Endothelial cell of umbilical vein (primary cell): ENCODE measurements at regions of chr1 and their contacts with region 1.

Region 1: GRCh38 chr1:222009105-222009730 is 267.3 kb upstream of the DUSP10 start:
- DNase-seq: peak; percentile 12
- H3K4me3 ChIP-seq: no peak overlapping the region
- H3K27ac ChIP-seq: no peak overlapping the region
- H3K4me1 ChIP-seq: no peaks in the 10 kb centered on the region
- H3K27me3 ChIP-seq: no peaks in the 10 kb centered on the region
- CTCF ChIP-seq: peak; percentile 7 to 13
- POLR2A ChIP-seq: no peak

Region 2: DNA sequence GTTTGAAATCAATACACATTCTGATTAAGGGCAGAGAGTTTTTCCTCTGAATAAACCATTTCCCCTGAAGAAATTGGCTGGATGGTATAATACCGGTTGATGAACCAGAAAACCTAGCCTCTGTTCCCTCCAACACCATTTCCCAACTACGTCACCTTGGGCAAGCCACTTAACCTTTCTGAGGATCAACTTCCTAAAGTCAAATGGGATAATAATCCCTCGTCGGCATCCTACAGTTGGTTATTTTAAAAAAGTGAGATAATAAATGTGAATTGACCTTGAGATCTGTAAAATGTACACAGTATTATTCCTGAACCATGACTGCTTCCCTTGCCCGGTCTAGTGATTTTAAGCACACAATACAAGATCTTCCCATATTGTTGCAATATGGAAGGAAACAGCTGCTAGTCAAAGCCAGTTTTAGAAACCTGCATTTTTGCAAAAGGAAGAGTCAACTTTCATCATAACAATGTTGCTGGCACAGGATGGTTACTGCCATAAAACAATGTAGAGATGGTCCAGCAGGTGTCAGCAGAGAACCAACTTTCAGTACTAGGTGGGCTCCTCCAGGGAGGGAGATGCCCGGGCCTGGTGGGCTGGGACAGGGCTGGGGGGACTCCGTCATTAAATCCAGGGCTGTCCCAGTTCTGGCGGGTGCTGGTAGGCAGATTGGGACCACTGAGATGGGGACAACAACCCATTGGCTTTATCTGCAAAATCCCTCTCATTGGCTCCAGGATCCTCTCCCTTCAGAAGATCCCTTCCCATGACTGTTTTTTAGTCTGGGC is 1135.2 kb before region 1 on chr1:
- CTCF ChIA-PET with region 1: no interaction called
- POLR2A ChIA-PET with region 1: no interaction called
- dilution Hi-C with region 1: no loop called
- intact Hi-C with region 1: loop called (anchors 2 kb)
- DNase-seq: peak; percentile 93
- H3K4me3 ChIP-seq: no peak overlapping the region
- H3K27ac ChIP-seq: peak overlapping the region; percentile 0
- H3K4me1 ChIP-seq: peaks cover 37% of the 10 kb centered on the region
- H3K27me3 ChIP-seq: peaks cover 3 to 14% of the 10 kb centered on the region in 2 experiments
- CTCF ChIP-seq: peak; percentile 52 to 69
- POLR2A ChIP-seq: no peak

Region 3: DNA sequence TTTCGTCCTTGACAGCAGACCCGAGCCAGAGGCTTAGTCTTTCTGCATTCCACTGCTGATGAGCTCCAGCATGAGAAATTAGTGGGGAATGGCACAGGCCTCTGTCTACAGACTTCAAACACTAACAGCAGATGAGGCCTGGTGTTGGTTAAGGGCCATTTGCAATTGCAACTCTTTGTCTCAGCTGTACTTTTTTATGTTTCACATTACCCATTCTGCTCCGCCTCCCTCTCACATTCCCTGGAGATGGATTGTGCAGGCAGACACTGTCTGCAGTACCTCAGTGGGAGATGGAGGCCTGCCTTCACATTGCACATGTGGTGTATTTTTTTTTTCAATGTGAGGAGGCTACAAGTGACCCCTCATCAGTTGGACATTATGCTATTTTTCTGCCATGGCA is 637.5 kb before region 1 on chr1:
- CTCF ChIA-PET with region 1: no interaction called
- POLR2A ChIA-PET with region 1: no interaction called
- dilution Hi-C with region 1: no loop called
- intact Hi-C with region 1: loop called (anchors 10 kb)
- DNase-seq: no peak
- H3K4me3 ChIP-seq: no peak overlapping the region
- H3K27ac ChIP-seq: no peak overlapping the region
- H3K4me1 ChIP-seq: no peaks in the 10 kb centered on the region
- H3K27me3 ChIP-seq: peaks cover 2 to 3% of the 10 kb centered on the region in 2 experiments
- CTCF ChIP-seq: no peak
- POLR2A ChIP-seq: no peak

Region 4: GRCh38 chr1:221478050-221478949 is 530.9 kb before region 1 on chr1:
- CTCF ChIA-PET with region 1: interaction called, 6 read pairs
- POLR2A ChIA-PET with region 1: no interaction called
- dilution Hi-C with region 1: no loop called
- intact Hi-C with region 1: loop called (anchors 1 kb)
- DNase-seq: peak; percentile 17
- H3K4me3 ChIP-seq: no peak overlapping the region
- H3K27ac ChIP-seq: no peak overlapping the region
- H3K4me1 ChIP-seq: no peaks in the 10 kb centered on the region
- H3K27me3 ChIP-seq: peaks cover 0 to 3% of the 10 kb centered on the region in 2 experiments
- CTCF ChIP-seq: peak in 1 of 2 donors; percentile 12
- POLR2A ChIP-seq: no peak

Region 5: GRCh38 chr1:221543529-221544120 is 465.6 kb before region 1 on chr1:
- CTCF ChIA-PET with region 1: interaction called, 6 read pairs
- POLR2A ChIA-PET with region 1: no interaction called
- dilution Hi-C with region 1: no loop called
- intact Hi-C with region 1: loop called (anchors 1 kb)
- DNase-seq: peak; percentile 25
- H3K4me3 ChIP-seq: no peak overlapping the region
- H3K27ac ChIP-seq: no peak overlapping the region
- H3K4me1 ChIP-seq: no peaks in the 10 kb centered on the region
- H3K27me3 ChIP-seq: peaks cover 0 to 2% of the 10 kb centered on the region in 2 experiments
- CTCF ChIP-seq: peak in 1 of 2 donors; percentile 30
- POLR2A ChIP-seq: no peak

Region 6: DNA sequence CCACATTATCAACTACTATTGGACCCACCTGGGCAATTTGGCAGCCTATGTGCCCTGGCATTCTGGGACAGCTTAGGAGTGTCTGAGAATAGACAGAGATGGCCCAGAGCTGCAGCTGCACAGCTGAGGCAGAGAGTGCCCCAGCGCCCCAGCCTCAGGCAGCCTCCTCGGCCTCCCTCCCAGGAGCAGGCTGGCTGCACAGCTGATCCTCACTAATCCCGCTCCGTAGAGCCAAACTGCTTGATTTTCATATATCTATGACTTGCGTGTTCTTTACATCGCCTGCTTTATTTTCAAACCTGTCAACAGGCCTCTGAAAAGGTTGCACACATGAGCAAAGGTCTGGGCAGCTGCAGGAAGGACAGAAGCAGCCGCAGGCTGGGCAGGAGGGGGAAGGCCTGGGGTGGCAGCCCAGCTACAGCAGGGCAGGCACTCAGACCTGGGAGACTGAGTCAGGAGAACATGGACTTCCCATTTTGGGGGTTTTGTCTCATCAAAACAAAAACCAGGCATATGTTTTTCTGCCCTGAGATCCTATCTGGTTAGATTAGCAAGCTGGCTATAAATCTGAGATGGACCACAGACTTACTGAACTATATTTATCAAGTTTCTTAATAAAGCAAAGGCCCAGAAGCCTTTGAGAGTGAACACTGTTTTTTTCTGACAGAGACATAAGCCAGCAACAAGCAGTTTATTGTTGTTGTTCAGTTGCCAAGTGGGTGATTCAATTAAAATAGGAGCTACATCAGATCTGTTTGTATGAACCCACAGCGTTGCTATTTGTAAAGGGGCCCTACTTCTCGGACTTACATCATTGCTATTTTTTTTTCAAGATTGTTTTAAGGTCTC is 34.5 kb after region 1 on chr1:
- CTCF ChIA-PET with region 1: no interaction called
- POLR2A ChIA-PET with region 1: no interaction called
- dilution Hi-C with region 1: no loop called
- intact Hi-C with region 1: no loop called
- DNase-seq: no peak
- H3K4me3 ChIP-seq: no peak overlapping the region
- H3K27ac ChIP-seq: no peak overlapping the region
- H3K4me1 ChIP-seq: no peaks in the 10 kb centered on the region
- H3K27me3 ChIP-seq: no peaks in the 10 kb centered on the region
- CTCF ChIP-seq: no peak
- POLR2A ChIP-seq: no peak